HEK293 (cell line): ENCODE measurements at regions of chr1 and their contacts with region 1.

Region 1: DNA sequence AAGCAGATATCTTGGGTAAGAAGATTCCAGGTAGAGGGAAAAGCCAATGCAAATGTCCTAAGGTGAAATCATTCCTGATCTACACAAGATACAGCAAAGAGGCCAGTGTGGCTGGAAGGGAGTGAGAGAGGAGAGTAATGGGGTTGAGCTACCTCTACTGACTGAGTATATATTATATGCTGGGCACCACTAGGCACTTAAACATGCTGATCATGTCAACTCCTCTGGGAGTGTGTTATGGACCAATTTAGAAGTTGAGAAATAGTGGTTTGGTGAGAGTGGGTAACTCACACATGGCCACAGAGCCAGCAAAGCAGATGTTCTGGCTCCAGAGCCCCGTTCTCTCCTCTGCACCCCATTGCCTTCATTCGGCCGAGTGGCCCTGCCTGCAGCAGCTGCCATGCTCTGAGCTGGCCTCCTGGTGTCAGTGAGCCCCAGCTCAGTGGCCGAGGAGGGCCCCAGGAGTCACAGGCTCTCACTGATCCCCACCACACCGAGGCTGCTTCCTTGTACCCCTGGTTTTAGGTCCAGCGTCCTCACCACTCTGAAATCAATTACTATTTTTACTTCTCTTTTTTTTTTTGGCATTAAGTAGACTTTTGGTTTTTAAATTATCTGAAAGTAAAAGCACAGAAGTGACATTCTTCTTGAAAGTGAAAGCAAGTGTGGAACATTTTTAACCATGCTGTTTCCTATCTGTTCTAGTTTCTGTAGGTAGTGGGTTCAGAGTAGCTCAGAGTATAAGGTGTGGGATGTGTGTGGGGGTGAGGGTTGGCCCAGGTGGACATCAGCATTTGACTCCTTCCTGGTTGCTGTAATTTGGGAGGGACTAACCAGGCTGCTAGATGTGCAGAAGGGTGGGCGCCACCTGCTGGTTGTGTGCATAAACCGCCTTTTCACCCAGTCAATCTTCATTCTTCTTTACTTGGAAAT is 45.8 kb upstream of the CRNN start:
- H3K4me3 ChIP-seq: no peak overlapping the region
- H3K27ac ChIP-seq: no peak overlapping the region
- H3K4me1 ChIP-seq: no peaks in the 10 kb centered on the region
- CTCF ChIP-seq: 0 out of 2 replicates have a peak, but pooled peaks have one; percentile 30

Region 2: GRCh38 chr1:152047730-152048402 is 412.0 kb before region 1 on chr1:
- CTCF ChIA-PET with region 1: interaction called, 70 read pairs
- POLR2A ChIA-PET with region 1: interaction called, 3 read pairs
- H3K4me3 ChIP-seq: peak overlapping the region; percentile 17
- H3K27ac ChIP-seq: peak overlapping the region; percentile 80
- H3K4me1 ChIP-seq: peaks cover 8% of the 10 kb centered on the region
- CTCF ChIP-seq: peak; percentile 89

Region 3: GRCh38 chr1:152141974-152142584 is 317.8 kb before region 1 on chr1:
- CTCF ChIA-PET with region 1: interaction called, 46 read pairs
- POLR2A ChIA-PET with region 1: no interaction called
- H3K4me3 ChIP-seq: no peak overlapping the region
- H3K27ac ChIP-seq: no peak overlapping the region
- H3K4me1 ChIP-seq: no peaks in the 10 kb centered on the region
- CTCF ChIP-seq: peak; percentile 62

Region 4: DNA sequence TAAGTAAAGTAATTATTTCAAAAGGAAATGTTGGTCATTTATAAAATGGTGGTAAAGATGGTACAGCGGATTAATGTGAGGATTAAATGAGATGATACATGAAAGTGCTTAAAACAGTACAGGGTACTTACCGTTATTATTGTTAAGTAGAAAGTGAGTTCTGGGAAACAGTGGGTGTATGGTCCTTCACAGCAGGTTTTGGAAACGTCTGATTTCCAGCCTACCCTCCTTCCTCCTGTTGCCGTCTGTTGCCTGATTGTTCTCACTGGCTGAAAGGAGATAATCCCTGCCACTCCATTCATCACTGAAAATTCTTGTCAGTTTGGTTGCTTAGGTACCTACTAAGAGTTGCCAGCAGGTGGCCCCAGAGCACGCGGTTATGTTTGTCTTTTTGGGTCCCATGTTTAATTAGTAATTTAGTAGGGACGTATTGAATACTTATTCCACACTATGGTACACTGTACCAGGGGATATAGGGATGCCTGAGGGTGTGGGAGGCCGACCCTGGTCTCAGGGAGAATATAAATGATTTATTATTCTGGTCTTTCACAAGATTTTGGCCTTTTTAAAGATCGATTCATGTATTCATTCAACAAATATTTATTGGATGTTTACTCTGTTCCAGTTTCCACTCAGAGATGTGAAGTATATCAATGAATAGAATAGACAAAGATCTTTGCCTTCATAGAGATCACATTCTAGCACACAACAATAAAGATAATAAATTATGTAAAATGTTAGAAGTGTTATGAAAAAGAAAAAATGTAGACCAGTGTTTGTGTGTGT is 270.0 kb before region 1 on chr1:
- CTCF ChIA-PET with region 1: interaction called, 176 read pairs
- POLR2A ChIA-PET with region 1: interaction called, 6 read pairs
- H3K4me3 ChIP-seq: peak overlapping the region; percentile 32; the same call in 1 of the 2 replicates
- H3K27ac ChIP-seq: no peak overlapping the region
- H3K4me1 ChIP-seq: no peaks in the 10 kb centered on the region
- CTCF ChIP-seq: peak; percentile 34; the same call in 1 of the 2 replicates

Region 5: GRCh38 chr1:152347116-152347728 is 112.6 kb before region 1 on chr1:
- CTCF ChIA-PET with region 1: interaction called, 31 read pairs
- POLR2A ChIA-PET with region 1: no interaction called
- H3K4me3 ChIP-seq: no peak overlapping the region
- H3K27ac ChIP-seq: no peak overlapping the region
- H3K4me1 ChIP-seq: no peaks in the 10 kb centered on the region
- CTCF ChIP-seq: no peak

Region 6: DNA sequence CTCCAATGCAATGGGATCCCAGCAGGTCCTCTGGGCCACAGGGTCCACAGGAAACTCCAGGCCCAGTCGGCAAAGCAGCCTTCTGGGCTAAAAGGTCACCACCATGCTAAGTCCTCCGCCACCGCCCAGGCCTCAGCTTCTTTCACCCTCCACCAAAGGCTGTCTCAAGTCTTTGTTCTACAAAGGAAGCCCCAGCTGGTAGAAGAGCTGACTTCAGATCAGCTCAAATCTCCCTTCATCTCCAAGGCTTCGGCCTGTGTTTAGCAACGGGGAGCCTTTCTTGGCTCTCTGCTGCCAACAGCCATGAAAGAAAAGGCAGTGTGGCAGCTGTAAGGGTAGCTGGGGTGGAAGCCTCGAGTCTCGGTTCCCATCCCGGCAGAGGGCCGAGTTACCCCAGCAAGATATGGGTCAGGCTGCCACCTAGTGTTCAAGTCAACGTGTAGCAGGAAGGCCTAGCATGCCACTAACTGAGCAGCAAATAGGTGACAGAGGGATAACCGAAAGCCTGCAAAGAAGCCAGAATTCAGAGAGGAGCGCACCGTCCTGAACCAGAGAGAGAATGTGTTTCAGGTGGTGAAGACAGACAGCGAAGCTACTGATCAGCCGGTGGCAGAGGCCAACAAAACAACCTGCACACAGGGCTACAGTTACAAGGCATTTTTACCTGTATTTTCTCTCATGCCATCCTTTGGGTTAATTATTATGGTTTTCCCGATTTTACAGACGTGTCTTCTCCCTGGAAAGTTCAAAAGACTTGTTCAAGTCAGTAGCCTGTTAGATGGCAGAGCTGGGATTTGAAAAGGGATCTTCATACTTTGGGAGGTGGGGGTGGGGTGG is 19.0 kb before region 1 on chr1:
- CTCF ChIA-PET with region 1: interaction called, 70 read pairs
- POLR2A ChIA-PET with region 1: no interaction called
- H3K4me3 ChIP-seq: no peak overlapping the region
- H3K27ac ChIP-seq: no peak overlapping the region
- H3K4me1 ChIP-seq: no peaks in the 10 kb centered on the region
- CTCF ChIP-seq: peak; percentile 79

Region 7: DNA sequence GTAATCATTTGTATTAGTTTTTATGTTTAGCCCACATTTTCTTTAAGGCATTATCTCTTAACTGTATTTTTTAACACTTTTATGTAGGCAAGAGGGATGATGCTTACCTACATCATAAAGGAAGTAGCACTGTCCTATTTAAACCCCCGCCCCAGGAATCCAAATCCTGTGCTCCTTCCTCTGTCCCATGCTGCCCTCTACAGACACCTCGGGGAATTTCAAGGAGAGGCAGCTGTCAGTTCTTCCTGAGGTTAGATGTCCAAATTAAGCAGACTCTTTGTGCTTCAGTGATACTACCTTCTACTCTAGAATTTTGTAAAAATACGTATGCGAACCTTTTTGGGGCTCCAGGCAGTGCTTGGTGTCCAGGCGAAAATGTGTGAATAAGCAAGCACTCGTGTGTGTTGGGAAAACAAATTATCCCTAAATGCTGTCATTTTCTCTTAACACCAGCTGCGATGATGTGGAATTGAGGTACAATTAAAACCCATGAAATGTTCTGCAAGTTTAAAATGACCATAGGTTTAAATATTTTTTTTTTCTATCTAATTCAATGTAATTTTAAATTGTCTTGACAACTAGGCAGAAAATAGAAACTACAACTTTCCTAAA is 73.6 kb after region 1 on chr1:
- CTCF ChIA-PET with region 1: interaction called, 18 read pairs
- POLR2A ChIA-PET with region 1: no interaction called
- H3K4me3 ChIP-seq: no peak overlapping the region
- H3K27ac ChIP-seq: no peak overlapping the region
- H3K4me1 ChIP-seq: no peaks in the 10 kb centered on the region
- CTCF ChIP-seq: peak; percentile 48; the same call in 1 of the 2 replicates